Breast epithelium (tissue), 4 donors: ENCODE measurements at regions of chr3 and their contacts with region 1.

Region 1: GRCh38 chr3:175620532-175620931 is 761.4 kb downstream of the NAALADL2 start:
- DNase-seq: no peak
- H3K4me3 ChIP-seq: peak overlapping the region in 2 of 3 donors; percentile 11 to 46
- H3K27ac ChIP-seq: no peak overlapping the region
- H3K4me1 ChIP-seq: no peaks in the 10 kb centered on the region
- H3K27me3 ChIP-seq: no peaks in the 10 kb centered on the region
- CTCF ChIP-seq: no peak
- POLR2A ChIP-seq: no peak

Region 2: GRCh38 chr3:175526609-175527280 is 93.8 kb before region 1 on chr3:
- intact Hi-C with region 1: no loop called
- DNase-seq: no peak
- H3K4me3 ChIP-seq: peak overlapping the region; percentile 40 to 54 (median 45)
- H3K27ac ChIP-seq: no peak overlapping the region
- H3K4me1 ChIP-seq: no peaks in the 10 kb centered on the region
- H3K27me3 ChIP-seq: no peaks in the 10 kb centered on the region
- CTCF ChIP-seq: no peak
- POLR2A ChIP-seq: no peak

Region 3: GRCh38 chr3:175606650-175607318 is 13.7 kb before region 1 on chr3:
- intact Hi-C with region 1: loop called (anchors 2 kb)
- DNase-seq: no peak
- H3K4me3 ChIP-seq: no peak overlapping the region
- H3K27ac ChIP-seq: no peak overlapping the region
- H3K4me1 ChIP-seq: no peaks in the 10 kb centered on the region
- H3K27me3 ChIP-seq: no peaks in the 10 kb centered on the region
- CTCF ChIP-seq: no peak
- POLR2A ChIP-seq: no peak